MCF 10A (cell line): ENCODE measurements at regions of chr11 and their contacts with region 1.

Region 1: GRCh38 chr11:130124096-130124495 is 35.5 kb upstream of the ST14 start:
- DNase-seq: peak; percentile 95
- H3K4me3 Mint-ChIP-seq: peak overlapping the region; percentile 30
- H3K27ac Mint-ChIP-seq: peak overlapping the region; percentile 49
- H3K4me1 Mint-ChIP-seq: peaks cover 25% of the 10 kb centered on the region
- H3K27me3 Mint-ChIP-seq: no peaks in the 10 kb centered on the region
- CTCF ChIP-seq: no peak

Region 2: GRCh38 chr11:129930296-129930695 is 193.8 kb before region 1 on chr11:
- CTCF ChIA-PET with region 1: interaction called, 234 read pairs
- POLR2A ChIA-PET with region 1: interaction called, 11 read pairs
- intact Hi-C with region 1: no loop called
- DNase-seq: peak; percentile 68
- H3K4me3 Mint-ChIP-seq: no peak overlapping the region
- H3K27ac Mint-ChIP-seq: no peak overlapping the region
- H3K4me1 Mint-ChIP-seq: peaks cover 10% of the 10 kb centered on the region
- H3K27me3 Mint-ChIP-seq: no peaks in the 10 kb centered on the region
- CTCF ChIP-seq: no peak

Region 3: DNA sequence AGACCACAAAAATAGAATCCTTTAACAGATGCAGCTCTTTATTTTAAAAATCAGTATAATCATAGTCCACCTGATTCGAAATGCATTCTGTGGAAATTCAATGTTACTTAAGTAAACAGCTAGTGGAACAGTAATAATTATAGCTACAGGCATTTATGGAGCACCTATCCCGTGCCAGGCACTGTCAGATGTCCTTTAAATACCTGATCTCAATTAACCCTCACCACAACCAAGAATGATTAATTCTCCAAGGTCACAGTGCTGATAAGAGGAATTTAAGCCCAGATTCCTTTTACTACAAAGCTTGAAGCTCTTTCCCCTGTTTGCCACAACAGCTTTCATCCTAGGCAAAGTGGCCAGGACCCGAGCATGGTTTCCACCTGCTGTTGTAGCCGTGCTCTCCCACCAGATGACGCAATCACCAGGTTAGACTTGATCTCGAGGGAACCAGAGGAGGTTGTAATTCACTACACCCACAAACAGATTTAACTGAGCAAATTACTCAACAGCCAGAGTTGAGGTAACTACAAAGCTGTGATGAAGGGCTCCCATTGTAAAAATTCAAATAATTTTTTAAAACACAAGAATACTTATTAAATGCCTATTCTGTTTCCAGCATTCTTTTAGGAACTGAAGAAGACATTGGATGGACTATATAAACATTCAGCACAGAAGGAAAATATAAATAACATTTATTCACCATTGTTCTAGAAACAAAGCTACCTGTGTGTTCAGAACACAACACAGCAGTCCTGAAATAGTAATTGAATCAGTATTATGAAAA is 131.7 kb before region 1 on chr11:
- CTCF ChIA-PET with region 1: interaction called, 11 read pairs
- POLR2A ChIA-PET with region 1: interaction called, 3 read pairs
- intact Hi-C with region 1: no loop called
- DNase-seq: peak; percentile 81
- H3K4me3 Mint-ChIP-seq: no peak overlapping the region
- H3K27ac Mint-ChIP-seq: no peak overlapping the region
- H3K4me1 Mint-ChIP-seq: peaks cover 24% of the 10 kb centered on the region
- H3K27me3 Mint-ChIP-seq: no peaks in the 10 kb centered on the region
- CTCF ChIP-seq: peak; percentile 32

Region 4: GRCh38 chr11:130076778-130077481 is 47.2 kb before region 1 on chr11:
- CTCF ChIA-PET with region 1: interaction called, 4 read pairs
- POLR2A ChIA-PET with region 1: interaction called, 48 read pairs
- intact Hi-C with region 1: no loop called
- DNase-seq: no peak
- H3K4me3 Mint-ChIP-seq: no peak overlapping the region
- H3K27ac Mint-ChIP-seq: peak overlapping the region; percentile 80
- H3K4me1 Mint-ChIP-seq: peaks cover 34% of the 10 kb centered on the region
- H3K27me3 Mint-ChIP-seq: no peaks in the 10 kb centered on the region
- CTCF ChIP-seq: no peak

Region 5: DNA sequence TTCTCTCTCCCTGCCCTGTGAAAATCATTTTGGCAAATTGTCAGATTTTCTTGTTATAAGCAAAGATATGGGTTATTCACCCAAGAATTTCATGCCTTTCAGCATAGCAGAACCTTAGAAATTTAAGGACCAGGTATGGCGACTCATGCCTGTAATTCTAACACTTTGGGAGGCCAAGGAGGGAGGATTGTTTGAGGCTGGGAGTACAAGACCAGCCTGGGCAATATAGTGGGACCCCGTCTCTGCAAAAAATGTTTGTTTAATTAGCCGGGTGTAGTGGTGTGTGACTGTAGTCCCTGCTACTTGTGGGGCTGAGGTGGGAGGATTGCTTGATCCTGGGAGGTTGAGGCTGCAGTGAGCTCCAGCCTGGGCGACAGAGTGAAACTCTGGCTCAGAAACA is 26.8 kb before region 1 on chr11:
- CTCF ChIA-PET with region 1: no interaction called
- POLR2A ChIA-PET with region 1: no interaction called
- intact Hi-C with region 1: no loop called
- DNase-seq: no peak
- H3K4me3 Mint-ChIP-seq: no peak overlapping the region
- H3K27ac Mint-ChIP-seq: no peak overlapping the region
- H3K4me1 Mint-ChIP-seq: peaks cover 39% of the 10 kb centered on the region
- H3K27me3 Mint-ChIP-seq: no peaks in the 10 kb centered on the region
- CTCF ChIP-seq: no peak

Region 6: GRCh38 chr11:130213143-130213978 is 89.3 kb after region 1 on chr11:
- CTCF ChIA-PET with region 1: no interaction called
- POLR2A ChIA-PET with region 1: no interaction called
- intact Hi-C with region 1: no loop called
- DNase-seq: peak; percentile 55
- H3K4me3 Mint-ChIP-seq: no peak overlapping the region
- H3K27ac Mint-ChIP-seq: no peak overlapping the region
- H3K4me1 Mint-ChIP-seq: no peaks in the 10 kb centered on the region
- H3K27me3 Mint-ChIP-seq: no peaks in the 10 kb centered on the region
- CTCF ChIP-seq: peak; percentile 96